ENCODE measurements at regions of chr14 and their contacts with region 1.

Region 1: GRCh38 chr14:91177073-91178034 is 63.5 kb downstream of the DGLUCY start:
- DNase-seq: no peak
- ATAC-seq: peak; percentile 59

Region 2: DNA sequence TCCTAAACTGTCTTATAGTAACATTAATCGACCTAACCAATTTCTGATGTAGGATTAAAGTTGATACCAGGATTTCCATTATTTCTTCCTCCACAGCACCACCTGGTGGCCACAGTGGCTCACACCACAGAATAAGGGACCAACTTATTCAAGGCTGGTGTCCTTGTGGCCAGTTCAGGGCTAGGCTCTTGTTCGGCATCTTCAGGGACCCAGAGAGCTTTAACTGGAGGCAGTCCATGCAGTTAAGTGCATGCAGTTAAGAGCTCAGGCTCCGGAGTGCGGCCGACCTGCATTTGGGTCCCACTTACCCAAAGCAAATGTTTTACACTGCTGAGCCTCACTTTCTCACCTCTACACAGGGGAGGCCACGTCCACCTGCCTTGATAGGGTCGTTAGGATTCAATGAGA is 109.2 kb after region 1 on chr14:
- intact Hi-C with region 1: loop called (anchors 10 kb)
- DNase-seq: peak; percentile 86
- ATAC-seq: peak; percentile 73

Measured in sciatic nerve (tissue), 2 donors.